ENCODE measurements at regions of chr15 and their contacts with region 1.

Region 1: GRCh38 chr15:77959432-77959879 is 118.1 kb downstream of the TBC1D2B start:
- DNase-seq: peak; percentile 75
- H3K4me3 ChIP-seq: peak overlapping the region; percentile 34
- H3K27ac ChIP-seq: no peak overlapping the region
- H3K4me1 ChIP-seq: peaks cover 14% of the 10 kb centered on the region
- CTCF ChIP-seq: peak; percentile 93

Region 2: DNA sequence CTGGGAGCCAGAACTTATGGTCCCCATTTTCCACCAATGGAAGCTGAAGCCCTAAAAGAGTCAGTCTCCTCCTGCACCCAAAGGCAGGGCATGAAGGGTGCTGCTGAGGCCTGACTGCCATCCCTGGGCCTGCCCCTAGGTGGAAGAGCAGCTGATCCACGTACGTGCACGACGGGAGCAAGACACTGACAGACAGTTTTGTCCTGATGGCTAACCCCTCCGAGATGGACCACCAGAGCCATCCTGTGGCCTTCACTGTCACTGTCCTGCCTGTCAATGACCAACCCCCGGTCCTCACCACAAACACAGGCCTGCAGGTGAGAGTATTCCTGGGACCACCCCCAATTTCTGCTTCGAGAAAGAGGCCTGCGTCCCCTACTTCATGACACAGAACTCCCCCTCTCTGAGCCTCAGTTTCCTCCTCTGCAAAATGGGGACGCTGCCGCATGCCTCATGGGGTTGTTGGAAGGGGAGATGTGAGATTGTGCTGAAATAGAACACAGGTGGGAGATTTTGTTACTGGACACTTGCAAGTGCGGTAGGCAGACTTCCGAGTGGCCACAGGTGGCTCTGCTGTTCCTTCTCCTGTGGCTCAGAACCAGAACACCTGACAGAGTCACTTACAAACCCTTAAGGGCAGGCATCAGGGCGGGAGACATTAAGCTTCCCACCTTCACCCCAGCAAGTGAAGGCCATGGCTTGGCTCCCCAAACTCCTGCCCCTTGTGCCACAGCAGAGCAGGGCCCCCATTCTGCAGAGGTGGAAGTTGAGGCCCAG is 57.3 kb before region 1 on chr15:
- CTCF ChIA-PET with region 1: no interaction called
- POLR2A ChIA-PET with region 1: interaction called, 4 read pairs
- intact Hi-C with region 1: loop called (anchors 5 kb)
- DNase-seq: peak; percentile 31
- H3K4me3 ChIP-seq: no peak overlapping the region
- H3K27ac ChIP-seq: no peak overlapping the region
- H3K4me1 ChIP-seq: no peaks in the 10 kb centered on the region
- CTCF ChIP-seq: peak; percentile 47; the same call in 1 of the 2 replicates

Region 3: GRCh38 chr15:77907824-77908751 is 51.4 kb before region 1 on chr15:
- CTCF ChIA-PET with region 1: interaction called, 5 read pairs
- POLR2A ChIA-PET with region 1: interaction called, 4 read pairs
- intact Hi-C with region 1: loop called (anchors 2 kb)
- DNase-seq: peak; percentile 77
- H3K4me3 ChIP-seq: no peak overlapping the region
- H3K27ac ChIP-seq: no peak overlapping the region
- H3K4me1 ChIP-seq: no peaks in the 10 kb centered on the region
- CTCF ChIP-seq: peak; percentile 77

Region 4: GRCh38 chr15:77992356-77993222 is 33.1 kb after region 1 on chr15:
- CTCF ChIA-PET with region 1: interaction called, 8 read pairs
- POLR2A ChIA-PET with region 1: interaction called, 3 read pairs
- intact Hi-C with region 1: loop called (anchors 1 kb)
- DNase-seq: no peak
- H3K4me3 ChIP-seq: no peak overlapping the region
- H3K27ac ChIP-seq: peak overlapping the region; percentile 59
- H3K4me1 ChIP-seq: peaks cover 57% of the 10 kb centered on the region
- CTCF ChIP-seq: no peak

Measured in OCI-LY7 (cell line).